CD8-positive, alpha-beta T cell (primary cell): ENCODE measurements at regions of chr15 and their contacts with region 1.

Region 1: GRCh38 chr15:35444557-35445204 is 101.3 kb downstream of the DPH6 start:
- DNase-seq: peak in 2 of 9 experiments; percentile 12 to 31
- ATAC-seq: no peak
- H3K4me3 ChIP-seq: no peak overlapping the region
- H3K4me3 Mint-ChIP-seq: no peak overlapping the region
- H3K27ac ChIP-seq: no peak overlapping the region
- H3K27ac Mint-ChIP-seq: no peak overlapping the region
- H3K4me1 ChIP-seq: no peaks in the 10 kb centered on the region
- H3K4me1 Mint-ChIP-seq: no peaks in the 10 kb centered on the region
- H3K27me3 ChIP-seq: no peaks in the 10 kb centered on the region
- H3K27me3 Mint-ChIP-seq: no peaks in the 10 kb centered on the region
- CTCF ChIP-seq: peak; percentile 59

Region 2: DNA sequence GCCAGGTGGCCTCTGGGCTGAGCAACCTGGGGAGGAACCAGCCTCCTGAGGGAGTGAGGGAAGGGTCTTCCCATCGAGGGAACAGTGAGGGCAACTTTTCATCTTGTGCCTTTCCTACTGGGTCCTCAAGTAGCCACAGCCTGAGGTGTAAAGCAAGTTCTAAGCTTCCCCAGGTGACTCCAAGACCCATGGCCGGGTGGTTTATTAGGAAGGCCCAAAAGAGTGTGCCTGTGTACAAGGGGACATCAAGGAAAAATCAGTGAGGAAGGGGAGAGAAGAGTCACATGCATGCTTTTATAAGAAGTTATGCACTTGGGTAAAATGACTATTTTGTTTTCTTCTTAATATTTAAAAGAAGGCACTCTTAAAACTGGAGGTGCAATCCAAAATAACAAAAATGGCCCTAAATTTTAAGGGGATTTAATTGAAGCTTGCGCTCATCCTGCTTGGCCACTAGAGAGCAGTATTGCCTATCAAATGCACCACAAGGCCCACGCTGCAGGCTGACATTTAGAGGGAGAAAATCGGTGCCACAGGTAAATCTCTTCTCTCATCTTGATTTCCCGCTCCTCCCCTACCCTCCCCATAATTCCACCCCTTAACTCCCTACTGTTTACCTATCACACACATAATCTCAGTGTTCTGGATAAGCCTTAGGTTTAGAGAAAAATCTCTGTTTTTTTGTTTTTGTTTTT is 366.3 kb before region 1 on chr15:
- CTCF ChIA-PET with region 1: interaction called, 15 read pairs
- POLR2A ChIA-PET with region 1: no interaction called
- intact Hi-C with region 1: loop called in 1 of 2 experiments (anchors 2 kb)
- DNase-seq: peak in 5 of 9 experiments; percentile 6 to 54 (median 34)
- ATAC-seq: no peak
- H3K4me3 ChIP-seq: no peak overlapping the region
- H3K4me3 Mint-ChIP-seq: no peak overlapping the region
- H3K27ac ChIP-seq: no peak overlapping the region
- H3K27ac Mint-ChIP-seq: no peak overlapping the region
- H3K4me1 ChIP-seq: no peaks in the 10 kb centered on the region
- H3K4me1 Mint-ChIP-seq: no peaks in the 10 kb centered on the region
- H3K27me3 ChIP-seq: no peaks in the 10 kb centered on the region
- H3K27me3 Mint-ChIP-seq: peaks cover 17% of the 10 kb centered on the region
- CTCF ChIP-seq: peak; percentile 75

Region 3: DNA sequence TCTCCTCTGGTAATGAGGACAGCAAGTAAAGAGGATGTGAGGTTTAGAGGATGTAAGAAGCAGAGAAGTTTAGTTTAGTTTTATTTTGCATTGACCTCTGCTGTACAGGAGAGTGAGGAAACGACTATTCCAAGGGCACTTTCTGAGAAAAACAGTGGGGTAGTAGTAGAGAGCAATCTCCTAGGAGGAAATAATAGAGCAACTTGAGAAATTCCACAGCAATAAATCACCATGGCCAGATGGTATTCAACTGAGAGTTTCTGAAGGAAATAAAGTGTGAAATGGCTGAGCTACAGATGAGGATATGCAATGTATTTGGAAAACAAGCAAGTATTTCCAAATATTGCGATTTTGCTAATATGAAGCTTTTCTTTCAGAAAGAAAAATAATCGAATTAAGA is 17.6 kb before region 1 on chr15:
- CTCF ChIA-PET with region 1: interaction called, 19 read pairs
- POLR2A ChIA-PET with region 1: no interaction called
- intact Hi-C with region 1: no loop called
- DNase-seq: no peak
- ATAC-seq: no peak
- H3K4me3 ChIP-seq: no peak overlapping the region
- H3K4me3 Mint-ChIP-seq: no peak overlapping the region
- H3K27ac ChIP-seq: no peak overlapping the region
- H3K27ac Mint-ChIP-seq: no peak overlapping the region
- H3K4me1 ChIP-seq: no peaks in the 10 kb centered on the region
- H3K4me1 Mint-ChIP-seq: no peaks in the 10 kb centered on the region
- H3K27me3 ChIP-seq: no peaks in the 10 kb centered on the region
- H3K27me3 Mint-ChIP-seq: no peaks in the 10 kb centered on the region
- CTCF ChIP-seq: no peak